H1 (cell line): ENCODE measurements at regions of chr19 and their contacts with region 1.

Region 1: DNA sequence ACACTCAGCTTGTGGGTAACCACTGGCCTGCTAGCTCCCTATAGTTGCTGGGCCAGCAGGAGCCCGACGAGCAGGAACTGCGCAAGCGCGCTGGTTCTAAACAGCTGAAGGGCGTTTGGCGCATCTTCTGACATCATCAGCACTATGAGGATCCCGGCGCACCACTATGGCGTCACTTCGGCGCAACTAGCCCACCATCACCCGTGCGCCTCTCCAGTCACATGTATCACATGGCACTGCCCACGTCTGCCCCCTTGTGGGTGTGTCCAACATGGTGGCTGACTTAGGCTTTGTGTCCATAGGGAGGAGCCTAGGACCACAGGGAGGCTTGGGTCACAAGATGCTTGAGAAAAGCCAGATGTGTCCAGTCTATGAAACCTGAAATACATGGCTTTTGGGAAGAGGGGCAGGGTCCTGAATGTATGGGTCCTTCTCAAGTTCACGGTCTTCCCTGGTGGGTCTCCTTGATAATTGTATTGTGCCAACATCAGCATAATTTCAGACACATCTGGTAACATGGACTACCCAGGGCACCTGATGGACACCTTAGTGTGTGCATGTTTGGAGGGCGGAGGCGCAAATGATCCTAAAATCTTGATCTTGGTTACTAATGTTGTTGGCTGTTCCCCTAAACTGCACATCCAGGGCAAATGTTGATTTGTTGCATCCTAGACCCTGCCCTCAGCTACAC is 18.0 kb downstream of the KLK4 start:
- DNase-seq: peak in 1 of 2 experiments; percentile 61
- H3K4me3 ChIP-seq: no peak overlapping the region
- H3K27ac ChIP-seq: no peak overlapping the region
- H3K4me1 ChIP-seq: no peaks in the 10 kb centered on the region
- H3K27me3 ChIP-seq: peaks cover 0 to 2% (median 1%) of the 10 kb centered on the region in 4 experiments; a peak in 1 of 7 replicates
- CTCF ChIP-seq: peak; percentile 43 to 69 (median 67)
- EP300 ChIP-seq: peak in 1 of 2 experiments; percentile 55; a peak in 1 of 3 replicates
- POLR2A ChIP-seq: no peak
- RAD21 ChIP-seq: peak; percentile 37 to 54

Region 2: GRCh38 chr19:50772404-50773311 is 120.5 kb before region 1 on chr19:
- CTCF ChIA-PET with region 1: no interaction called
- POLR2A ChIA-PET with region 1: no interaction called
- DNase-seq: no peak
- H3K4me3 ChIP-seq: no peak overlapping the region
- H3K27ac ChIP-seq: no peak overlapping the region
- H3K4me1 ChIP-seq: peaks cover 0 to 2% (median under 1%) of the 10 kb centered on the region in 4 experiments; a peak in 2 of 7 replicates
- H3K27me3 ChIP-seq: peaks cover 1 to 28% (median 9%) of the 10 kb centered on the region in 4 experiments
- CTCF ChIP-seq: no peak
- EP300 ChIP-seq: no peak
- POLR2A ChIP-seq: no peak
- RAD21 ChIP-seq: no peak

Region 3: GRCh38 chr19:50882183-50882582 is 11.0 kb before region 1 on chr19:
- CTCF ChIA-PET with region 1: interaction called, 12 read pairs
- POLR2A ChIA-PET with region 1: no interaction called
- DNase-seq: no peak
- H3K4me3 ChIP-seq: no peak overlapping the region
- H3K27ac ChIP-seq: no peak overlapping the region
- H3K4me1 ChIP-seq: peaks cover 0 to 9% (median 1%) of the 10 kb centered on the region in 4 experiments; a peak in 2 of 7 replicates
- H3K27me3 ChIP-seq: peaks cover 0 to 4% (median 1%) of the 10 kb centered on the region in 4 experiments; a peak in 4 of 7 replicates
- CTCF ChIP-seq: peak in 2 of 3 experiments; percentile 14 to 19; a peak in 3 of 4 replicates
- EP300 ChIP-seq: no peak
- POLR2A ChIP-seq: no peak
- RAD21 ChIP-seq: peak in 1 of 2 experiments; percentile 6; a peak in 1 of 4 replicates

Region 4: DNA sequence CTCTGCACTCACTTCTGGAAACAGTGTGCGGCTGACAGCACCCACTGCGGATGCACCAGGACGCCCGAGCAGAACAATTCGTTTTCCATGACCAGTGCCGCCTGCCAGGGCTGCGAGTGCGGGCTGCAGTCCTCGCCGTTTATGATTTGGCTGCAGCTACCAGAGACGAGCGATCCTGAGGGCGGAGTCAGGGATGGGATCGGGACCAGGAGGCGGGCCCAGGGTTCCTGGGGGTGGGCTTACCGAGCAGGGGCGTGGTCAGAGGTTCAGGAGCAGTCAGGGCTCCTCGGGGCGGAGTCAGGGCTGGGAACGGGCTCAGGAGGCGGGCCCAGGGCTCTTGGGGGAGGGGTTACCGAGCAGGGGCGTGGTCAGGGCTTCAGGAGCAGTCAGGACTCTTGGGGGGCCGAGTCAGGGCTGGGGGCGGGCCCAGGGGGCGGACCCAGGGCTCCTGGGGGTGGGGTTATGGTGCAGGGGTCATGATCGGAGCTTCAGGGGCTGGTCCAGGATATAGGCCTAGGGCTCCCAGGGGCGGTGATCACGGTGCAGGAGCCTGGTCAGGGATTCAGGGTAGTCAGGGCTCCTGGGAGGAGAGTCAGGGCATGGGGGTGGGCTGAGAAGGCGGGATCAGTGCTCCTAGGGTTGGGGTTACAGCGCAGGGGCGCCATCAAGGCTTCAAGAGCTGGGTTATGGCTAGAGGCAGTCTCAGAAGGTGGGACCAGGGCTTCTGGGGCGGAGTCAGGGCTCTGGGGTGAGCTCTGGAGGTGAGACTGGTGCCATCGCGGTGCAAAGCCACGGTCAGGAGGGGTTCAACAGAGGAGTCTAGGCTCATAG is 16.3 kb after region 1 on chr19:
- CTCF ChIA-PET with region 1: interaction called, 29 read pairs
- POLR2A ChIA-PET with region 1: no interaction called
- DNase-seq: peak; percentile 95 to 100
- H3K4me3 ChIP-seq: peak overlapping the region; percentile 38 to 68 (median 54)
- H3K27ac ChIP-seq: no peak overlapping the region
- H3K4me1 ChIP-seq: peaks cover 0 to 14% (median 9%) of the 10 kb centered on the region in 4 experiments; a peak in 5 of 7 replicates
- H3K27me3 ChIP-seq: peaks cover 20 to 40% (median 32%) of the 10 kb centered on the region in 4 experiments
- CTCF ChIP-seq: no peak
- EP300 ChIP-seq: no peak
- POLR2A ChIP-seq: no peak
- RAD21 ChIP-seq: no peak